ENCODE measurements at regions of chr11 and their contacts with region 1.

Region 1: DNA sequence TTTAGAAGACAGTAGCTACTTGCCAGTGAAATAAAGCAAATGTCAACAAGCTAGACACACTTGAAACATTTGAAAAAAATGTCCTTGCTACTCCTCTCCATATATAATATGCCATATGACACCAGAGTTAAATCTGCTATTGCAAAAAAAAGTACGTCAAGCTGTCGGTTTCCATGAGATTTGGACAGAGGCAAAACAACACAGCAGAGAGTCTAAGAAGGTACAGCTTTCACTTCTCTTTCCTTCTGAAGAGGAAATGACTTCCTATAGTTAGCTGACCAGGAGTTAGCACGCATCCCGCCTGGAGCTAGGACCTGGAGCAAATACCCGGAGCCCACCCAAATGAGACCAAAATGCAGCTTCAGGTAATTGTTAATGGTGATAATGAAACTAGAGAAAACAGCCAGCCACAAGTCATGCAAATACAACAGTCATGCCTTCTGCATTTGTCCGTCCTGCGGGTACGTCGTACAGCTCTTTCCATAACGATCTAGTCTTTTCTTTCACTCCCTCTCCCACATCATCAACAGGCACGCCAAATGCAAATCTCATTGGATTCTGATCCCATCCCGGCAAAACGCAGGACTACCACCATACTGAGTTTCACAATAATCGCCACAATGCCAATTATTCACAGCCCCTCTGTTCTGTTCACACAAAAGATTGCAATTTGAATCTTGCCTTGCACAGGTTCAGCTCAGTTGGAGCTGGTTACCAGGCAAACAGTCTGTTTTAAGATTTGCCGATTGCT is 395.0 kb upstream of the CCDC90B start:
- DNase-seq: no peak
- ATAC-seq: no peak
- H3K4me3 ChIP-seq: peak overlapping the region in 4 of 12 donors; percentile 5 to 32 (median 29)
- H3K27ac ChIP-seq: no peak overlapping the region
- H3K4me1 ChIP-seq: no peaks in the 10 kb centered on the region
- H3K27me3 ChIP-seq: peaks cover 0 to 13% (median 0%) of the 10 kb centered on the region in 9 donors
- CTCF ChIP-seq: no peak
- POLR2A ChIP-seq: no peak

Region 2: DNA sequence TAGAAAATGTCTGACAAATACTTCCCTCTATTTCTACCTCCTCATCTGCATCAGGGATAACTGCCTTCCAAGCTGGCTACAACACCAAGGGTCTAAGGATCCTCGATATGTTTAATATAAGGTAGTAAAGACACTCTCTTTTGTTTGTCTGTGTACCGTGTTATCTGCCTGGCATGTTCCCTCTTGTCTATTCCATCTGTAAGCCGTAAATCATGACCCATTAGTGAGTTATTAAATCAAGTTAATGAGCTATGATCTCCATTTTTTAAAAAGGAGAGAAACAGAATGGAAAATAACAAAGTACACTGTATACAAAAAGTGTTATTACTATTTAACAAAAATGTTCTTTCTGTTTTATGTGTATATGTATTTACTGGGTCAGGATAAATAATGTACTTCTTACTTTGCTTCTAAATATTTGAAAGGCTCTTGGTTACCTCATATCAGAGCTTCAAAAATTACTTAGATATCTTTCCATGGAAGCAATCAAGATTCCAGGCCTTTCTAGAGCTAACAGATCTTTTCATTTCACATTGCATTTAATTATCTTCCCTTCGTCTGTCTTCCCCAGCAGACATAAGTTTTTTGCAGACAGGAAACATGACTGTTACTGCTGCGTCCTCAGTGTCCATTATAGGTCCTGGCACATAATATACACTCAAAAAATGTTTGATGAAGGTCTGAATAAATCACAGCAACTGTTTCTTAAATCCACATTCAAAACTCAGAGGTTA is 52.4 kb before region 1 on chr11:
- intact Hi-C with region 1: loop called in 1 of 10 experiments (anchors 10 kb)
- DNase-seq: no peak
- ATAC-seq: no peak
- H3K4me3 ChIP-seq: no peak overlapping the region
- H3K27ac ChIP-seq: no peak overlapping the region
- H3K4me1 ChIP-seq: no peaks in the 10 kb centered on the region
- H3K27me3 ChIP-seq: no peaks in the 10 kb centered on the region
- CTCF ChIP-seq: no peak
- POLR2A ChIP-seq: no peak

Region 3: DNA sequence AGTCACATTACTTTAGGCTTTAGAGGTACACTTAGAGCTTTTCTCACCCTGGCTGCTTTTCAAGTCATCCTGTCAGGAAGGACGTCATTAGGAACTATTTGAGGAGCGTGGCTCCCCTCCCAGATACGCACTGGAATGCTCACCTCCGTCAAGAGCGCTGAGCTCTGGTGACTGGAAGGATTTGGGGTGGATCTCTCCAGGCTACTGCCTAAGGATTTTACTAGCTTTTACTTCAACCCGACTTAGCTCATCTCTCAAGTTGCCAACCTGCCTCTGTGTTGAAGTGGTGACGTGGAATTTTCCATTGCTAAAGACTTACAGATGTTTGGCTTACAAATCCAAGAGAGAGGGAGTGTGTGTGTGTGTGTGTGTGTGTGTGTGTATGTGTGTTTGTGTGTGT is 39.7 kb before region 1 on chr11:
- intact Hi-C with region 1: no loop called
- DNase-seq: peak in 4 of 5 donors; percentile 31 to 69 (median 56)
- ATAC-seq: peak; percentile 37 to 98 (median 98)
- H3K4me3 ChIP-seq: no peak overlapping the region
- H3K27ac ChIP-seq: peak overlapping the region in 4 of 12 donors; percentile 3 to 39 (median 26)
- H3K4me1 ChIP-seq: peaks cover 0 to 13% (median 0%) of the 10 kb centered on the region in 12 donors
- H3K27me3 ChIP-seq: no peaks in the 10 kb centered on the region
- CTCF ChIP-seq: no peak
- POLR2A ChIP-seq: no peak